ENCODE measurements at regions of chr9 and their contacts with region 1.

Region 1: GRCh38 chr9:113401027-113401792 is at the start of gene ALAD:
- DNase-seq: peak; percentile 94 to 100 (median 99)

Region 2: GRCh38 chr9:113056191-113057106 is 344.8 kb before region 1 on chr9 and contains the start of gene ZFP37:
- intact Hi-C with region 1: loop called (anchors 10 kb)
- DNase-seq: peak; percentile 91 to 99 (median 96)

Region 3: DNA sequence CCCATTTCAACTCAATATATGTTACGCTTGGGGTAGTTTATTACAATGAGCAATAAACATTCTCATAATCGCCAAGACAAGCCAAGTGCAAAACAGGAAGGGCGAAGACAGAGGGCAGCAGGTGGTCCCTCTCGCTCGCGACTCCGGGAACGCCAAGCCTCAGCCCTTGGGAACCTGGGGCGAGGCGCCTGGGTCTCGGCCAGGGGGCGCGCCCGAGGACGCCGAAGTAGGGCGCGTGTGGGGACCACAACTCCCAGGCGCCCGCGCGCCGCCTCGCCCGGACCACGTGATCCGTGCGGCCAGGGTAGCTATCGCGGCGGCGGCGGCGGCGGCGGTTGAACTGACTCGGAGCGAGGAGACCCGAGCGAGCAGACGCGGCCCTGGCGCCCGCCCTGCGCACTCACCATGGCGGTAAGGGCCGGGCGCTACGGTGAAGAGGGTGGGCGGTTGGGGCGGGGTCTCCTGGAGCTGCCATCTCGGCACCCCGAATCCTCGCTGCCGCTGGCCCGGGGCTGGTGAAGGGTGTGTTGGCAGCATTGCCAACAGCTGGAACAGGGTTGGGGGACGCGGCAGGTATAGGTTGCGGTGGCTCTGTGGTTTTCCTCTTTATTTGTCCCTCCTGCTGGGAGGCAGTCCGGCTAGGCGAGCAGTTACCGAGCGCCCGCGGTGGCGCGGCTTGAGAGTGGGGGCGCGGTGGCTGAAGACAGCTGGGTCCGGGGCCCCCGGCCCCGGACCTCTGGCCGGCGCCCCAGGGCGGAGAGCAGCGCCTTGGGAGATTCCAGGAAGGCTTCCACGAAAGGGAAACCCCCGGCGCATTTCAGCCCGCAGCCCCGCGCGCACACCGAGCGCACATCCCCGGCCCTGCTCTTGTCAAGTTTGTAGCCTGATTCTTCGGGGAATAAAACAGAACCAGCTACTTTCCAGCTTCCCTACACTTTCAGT is 250.3 kb before region 1 on chr9 and contains the start of gene SLC31A2:
- intact Hi-C with region 1: loop called (anchors 10 kb)
- DNase-seq: peak; percentile 80 to 98 (median 95)

Region 4: DNA sequence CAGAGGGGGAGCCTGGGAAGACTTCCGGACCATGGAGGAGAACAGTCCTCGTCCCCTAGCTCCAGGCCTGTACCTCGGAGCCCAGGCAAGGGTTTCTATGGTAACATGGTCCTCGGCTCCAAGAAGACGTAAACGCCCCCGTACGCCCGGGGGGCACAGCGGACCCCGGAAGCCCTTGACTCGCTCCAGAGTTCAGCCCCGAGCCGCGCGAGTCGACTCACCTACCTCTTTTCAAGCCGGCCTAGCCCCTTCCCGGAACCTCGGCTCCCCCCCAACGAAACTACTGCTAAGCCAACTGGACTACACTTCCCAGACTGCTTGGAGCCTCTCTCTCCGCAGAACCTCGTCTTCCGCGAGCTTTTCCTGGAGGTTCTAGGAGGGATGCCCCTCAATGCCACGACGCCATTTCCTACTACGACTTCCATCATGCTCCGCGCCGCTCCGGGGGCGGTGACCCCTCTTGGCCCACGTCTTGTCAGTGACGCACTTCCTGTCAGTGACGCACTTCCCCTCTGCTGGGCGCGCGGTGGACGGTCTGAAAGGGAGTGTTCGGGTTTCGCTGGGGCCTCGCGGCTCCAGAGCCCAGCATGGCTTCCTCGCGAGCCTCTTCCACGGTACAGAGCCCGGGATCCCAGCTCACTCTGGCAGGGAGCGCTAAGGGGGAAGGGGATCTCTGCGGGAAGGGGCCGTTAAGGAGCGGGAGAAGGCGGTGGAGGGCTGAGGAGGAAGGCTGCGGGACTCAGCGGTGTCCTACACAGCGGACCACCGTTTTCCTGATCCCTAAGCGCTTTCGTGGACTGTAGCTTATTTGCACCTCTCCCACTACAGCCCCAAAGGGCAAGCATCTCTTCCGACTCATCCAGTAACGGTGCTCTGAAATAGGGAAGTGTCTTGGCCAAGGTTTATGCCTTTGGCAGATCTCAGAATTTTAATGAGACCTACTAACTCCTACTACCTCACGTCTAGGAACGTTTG is 125.8 kb before region 1 on chr9 and contains the starts of genes CDC26 and PRPF4:
- intact Hi-C with region 1: loop called (anchors 5 kb)
- DNase-seq: peak; percentile 92 to 99 (median 98)

Region 5: DNA sequence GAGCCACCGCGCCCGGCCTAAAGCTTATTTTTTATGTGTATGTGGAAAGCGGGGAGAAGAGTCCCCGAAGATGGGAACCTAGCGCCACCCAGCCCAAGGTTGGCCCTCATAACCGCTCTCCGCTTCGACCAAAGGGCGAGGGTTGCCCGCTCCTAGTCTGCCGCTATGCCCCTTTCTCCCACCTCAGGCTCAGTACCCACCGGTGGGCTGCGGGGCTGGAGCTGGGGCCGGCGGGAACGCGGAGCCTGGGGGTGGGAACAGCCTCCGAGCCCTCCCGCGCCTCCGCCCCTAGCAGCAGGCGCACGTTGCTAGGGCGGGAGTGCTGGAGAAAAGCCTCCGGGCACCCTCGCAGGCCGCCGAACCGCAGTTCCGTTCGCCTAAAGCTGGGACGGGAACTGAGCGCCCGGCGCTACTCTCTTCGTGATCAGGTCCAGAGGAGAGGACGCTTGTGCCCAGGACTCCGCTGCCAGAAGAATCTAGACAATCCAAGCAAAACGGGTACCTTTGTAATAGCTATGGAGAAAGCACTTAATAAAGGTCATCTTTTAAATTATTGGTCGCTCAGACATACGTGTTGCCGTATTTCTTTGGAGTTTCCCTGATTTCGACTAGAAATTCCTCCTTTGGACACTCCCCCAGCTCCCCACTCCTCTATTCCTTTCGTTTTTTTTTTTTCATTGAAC is 61.1 kb before region 1 on chr9 and contains the start of gene WDR31:
- intact Hi-C with region 1: loop called (anchors 2 kb)
- DNase-seq: peak; percentile 82 to 97 (median 91)

Region 6: GRCh38 chr9:113446323-113446740 is 45.1 kb after region 1 on chr9:
- intact Hi-C with region 1: no loop called
- DNase-seq: peak in 4 of 42 donors; percentile 15 to 41 (median 21)